ENCODE measurements at regions of chr2 and their contacts with region 1.

Region 1: GRCh38 chr2:73385595-73386341 is at the start of gene ALMS1:
- DNase-seq: peak; percentile 94
- ATAC-seq: peak; percentile 89
- H3K4me3 Mint-ChIP-seq: peak within 1 kb of the TSS; percentile 91
- H3K27ac Mint-ChIP-seq: peak within 1 kb of the TSS; percentile 91
- H3K4me1 Mint-ChIP-seq: peaks cover 27% of the 10 kb centered on the region
- H3K27me3 Mint-ChIP-seq: no peaks in the 10 kb centered on the region
- total RNA-seq, gene ALMS1: 19.2 to 24.0 TPM

Region 2: DNA sequence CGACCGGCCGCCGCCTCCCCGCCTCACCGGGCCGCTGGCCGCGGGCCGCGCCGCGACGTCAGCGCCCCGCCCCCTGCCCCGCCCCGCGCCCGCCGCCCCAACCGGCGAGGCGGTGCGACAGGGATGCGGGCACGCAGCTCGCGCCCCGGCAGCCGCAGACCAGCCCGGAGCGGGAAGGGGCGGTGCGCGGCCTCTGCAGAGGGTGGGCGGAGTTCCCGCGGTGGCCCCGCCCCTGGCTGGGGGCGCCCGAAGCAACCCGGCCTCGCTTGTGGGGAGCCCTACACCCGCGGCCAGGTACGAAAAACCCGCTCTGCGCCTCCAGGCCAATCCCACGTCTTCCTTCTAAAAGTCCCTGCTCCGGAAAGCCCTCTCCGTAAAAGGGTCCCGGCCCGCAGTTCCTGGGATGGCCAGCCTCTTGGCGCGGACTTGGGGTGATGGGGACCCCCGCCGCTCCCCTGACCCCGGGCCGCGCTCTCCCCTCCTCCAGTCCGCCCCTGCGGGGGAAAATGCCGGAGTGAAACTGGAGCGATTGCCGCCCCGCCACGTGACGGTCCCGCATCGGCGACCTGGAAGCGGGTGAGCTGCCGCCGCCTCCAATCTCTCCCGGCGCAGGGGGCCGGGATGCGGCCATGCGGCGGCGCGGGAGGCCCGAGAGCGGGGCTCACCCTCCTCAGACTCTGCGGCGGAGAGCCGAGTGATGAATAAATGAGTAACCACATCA is 272.7 kb before region 1 on chr2 and contains the start of gene RAB11FIP5:
- CTCF ChIA-PET with region 1: no interaction called
- POLR2A ChIA-PET with region 1: no interaction called
- intact Hi-C with region 1: loop called in 1 of 2 experiments (anchors 2 kb)
- DNase-seq: peak; percentile 87
- ATAC-seq: peak; percentile 84
- H3K4me3 Mint-ChIP-seq: peak within 1 kb of the TSS; percentile 79
- H3K27ac Mint-ChIP-seq: peak within 1 kb of the TSS; percentile 40
- H3K4me1 Mint-ChIP-seq: peaks cover 23% of the 10 kb centered on the region
- H3K27me3 Mint-ChIP-seq: peaks cover 2% of the 10 kb centered on the region
- total RNA-seq, gene RAB11FIP5: 16.4 to 16.5 TPM

Region 3: GRCh38 chr2:73225513-73226360 is 160.0 kb before region 1 on chr2:
- CTCF ChIA-PET with region 1: no interaction called
- POLR2A ChIA-PET with region 1: no interaction called
- intact Hi-C with region 1: no loop called
- DNase-seq: no peak
- ATAC-seq: no peak
- H3K4me3 Mint-ChIP-seq: no peak overlapping the region
- H3K27ac Mint-ChIP-seq: no peak overlapping the region
- H3K4me1 Mint-ChIP-seq: peaks cover 2% of the 10 kb centered on the region
- H3K27me3 Mint-ChIP-seq: no peaks in the 10 kb centered on the region

Region 4: GRCh38 chr2:73268830-73269685 is 116.7 kb before region 1 on chr2:
- CTCF ChIA-PET with region 1: interaction called, 3 read pairs
- POLR2A ChIA-PET with region 1: no interaction called
- intact Hi-C with region 1: loop called in 1 of 2 experiments (anchors 1 kb)
- DNase-seq: peak; percentile 86
- ATAC-seq: peak; percentile 95
- H3K4me3 Mint-ChIP-seq: peak overlapping the region; percentile 18
- H3K27ac Mint-ChIP-seq: no peak overlapping the region
- H3K4me1 Mint-ChIP-seq: peaks cover 21% of the 10 kb centered on the region
- H3K27me3 Mint-ChIP-seq: no peaks in the 10 kb centered on the region

Region 5: GRCh38 chr2:73337828-73338227 is 47.9 kb before region 1 on chr2:
- CTCF ChIA-PET with region 1: no interaction called
- POLR2A ChIA-PET with region 1: no interaction called
- intact Hi-C with region 1: no loop called
- DNase-seq: no peak
- ATAC-seq: no peak
- H3K4me3 Mint-ChIP-seq: no peak overlapping the region
- H3K27ac Mint-ChIP-seq: no peak overlapping the region
- H3K4me1 Mint-ChIP-seq: no peaks in the 10 kb centered on the region
- H3K27me3 Mint-ChIP-seq: peaks cover 7% of the 10 kb centered on the region

Region 6: GRCh38 chr2:73601780-73602179 is 216.0 kb after region 1 on chr2:
- CTCF ChIA-PET with region 1: no interaction called
- POLR2A ChIA-PET with region 1: no interaction called
- intact Hi-C with region 1: loop called in 1 of 2 experiments (anchors 1 kb)
- DNase-seq: no peak
- ATAC-seq: no peak
- H3K4me3 Mint-ChIP-seq: no peak overlapping the region
- H3K27ac Mint-ChIP-seq: no peak overlapping the region
- H3K4me1 Mint-ChIP-seq: peaks cover 6% of the 10 kb centered on the region
- H3K27me3 Mint-ChIP-seq: no peaks in the 10 kb centered on the region

Region 7: DNA sequence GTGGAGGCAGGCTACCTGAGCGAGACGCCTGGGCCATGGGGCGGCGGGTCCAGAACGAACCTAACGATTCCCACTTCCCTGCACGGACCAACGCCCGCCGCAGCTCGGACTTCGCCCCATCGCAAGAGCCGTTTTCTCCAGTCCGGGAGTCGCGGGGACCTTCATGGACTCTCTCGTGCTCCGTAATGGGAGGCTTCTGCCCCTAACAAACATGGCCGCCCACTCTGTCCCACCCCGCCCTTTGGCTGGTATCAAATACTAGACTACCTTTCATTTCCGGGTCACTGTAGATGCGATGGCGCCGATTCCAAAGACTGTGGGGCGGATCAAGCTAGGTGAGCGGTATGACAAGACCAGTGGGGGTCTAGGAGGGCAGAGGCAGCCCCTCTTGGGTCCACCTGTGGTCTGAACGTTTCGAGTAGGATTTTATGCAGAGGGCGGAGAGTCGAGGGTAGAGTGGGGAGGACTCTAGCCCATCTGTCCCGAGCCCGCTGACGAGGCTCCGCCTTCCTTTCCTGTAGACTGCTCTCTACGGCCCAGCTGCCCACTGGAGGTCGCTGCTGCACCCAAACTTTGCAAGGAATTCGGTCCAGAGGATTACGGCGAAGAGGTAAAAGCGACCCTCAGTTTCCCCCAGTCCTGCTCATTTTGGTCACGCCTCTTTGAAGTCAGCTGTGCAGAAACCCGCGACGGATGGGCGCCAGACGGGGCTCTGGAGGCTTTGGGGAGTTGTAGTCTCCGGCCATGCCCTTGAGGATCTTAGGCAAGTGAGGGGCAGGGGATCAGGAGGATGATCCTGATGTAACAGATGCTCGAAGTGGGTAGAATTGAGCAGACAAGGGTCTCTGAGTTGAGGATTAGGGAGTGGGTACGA is 1097.3 kb after region 1 on chr2 and contains the starts of genes CCDC142 and TTC31:
- CTCF ChIA-PET with region 1: no interaction called
- POLR2A ChIA-PET with region 1: no interaction called
- intact Hi-C with region 1: loop called in 1 of 2 experiments (anchors 2 kb)
- DNase-seq: peak; percentile 96
- ATAC-seq: peak; percentile 95
- H3K4me3 Mint-ChIP-seq: peak within 1 kb of the TSS; percentile 90
- H3K27ac Mint-ChIP-seq: peak within 1 kb of the TSS; percentile 99
- H3K4me1 Mint-ChIP-seq: peaks cover 31% of the 10 kb centered on the region
- H3K27me3 Mint-ChIP-seq: no peaks in the 10 kb centered on the region
- total RNA-seq, gene CCDC142: 9.7 to 13.2 TPM
- total RNA-seq, gene TTC31: 24.0 to 24.6 TPM

Region 8: DNA sequence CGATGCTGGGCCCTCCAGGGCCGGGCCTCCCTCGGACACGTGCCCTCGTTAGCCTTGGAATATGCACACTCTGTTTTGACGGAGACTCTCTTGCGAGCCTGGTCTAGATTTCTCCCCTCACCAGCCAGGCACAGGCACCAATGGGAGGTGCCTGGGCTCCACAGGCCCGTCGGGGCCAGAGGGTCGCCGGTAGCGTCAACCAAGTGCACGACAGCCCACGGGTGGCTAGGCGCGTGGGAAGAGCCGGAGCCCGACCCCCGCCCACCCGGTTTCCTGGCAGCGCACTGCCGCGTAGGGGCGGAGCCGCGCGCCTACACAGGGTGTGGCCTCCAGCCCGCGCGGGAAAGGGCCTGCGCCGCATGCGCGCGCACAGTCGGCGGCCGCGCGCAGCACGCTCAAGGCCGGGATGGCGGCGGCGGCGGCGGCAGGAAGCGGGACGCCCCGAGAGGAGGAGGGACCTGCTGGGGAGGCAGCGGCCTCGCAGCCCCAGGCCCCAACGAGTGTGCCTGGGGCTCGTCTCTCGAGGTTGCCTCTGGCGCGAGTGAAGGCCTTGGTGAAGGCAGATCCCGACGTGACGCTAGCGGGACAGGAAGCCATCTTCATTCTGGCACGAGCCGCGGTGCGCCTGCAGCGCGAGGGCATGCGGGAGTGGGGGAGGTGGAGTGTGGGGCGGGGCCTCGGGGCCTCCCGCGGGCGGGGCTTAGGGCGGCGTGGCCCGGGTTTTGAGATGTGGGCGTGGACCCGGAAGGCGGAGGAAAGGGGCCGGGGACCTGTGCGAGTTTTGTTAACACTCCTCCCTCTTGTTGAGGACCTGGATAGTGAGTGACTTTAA is 1572.7 kb after region 1 on chr2 and contains the start of gene POLE4:
- CTCF ChIA-PET with region 1: no interaction called
- POLR2A ChIA-PET with region 1: no interaction called
- intact Hi-C with region 1: loop called in 1 of 2 experiments (anchors 5 kb)
- DNase-seq: peak; percentile 97
- ATAC-seq: peak; percentile 92
- H3K4me3 Mint-ChIP-seq: peak within 1 kb of the TSS; percentile 68
- H3K27ac Mint-ChIP-seq: peak within 1 kb of the TSS; percentile 88
- H3K4me1 Mint-ChIP-seq: peaks cover 72% of the 10 kb centered on the region
- H3K27me3 Mint-ChIP-seq: no peaks in the 10 kb centered on the region
- total RNA-seq, gene POLE4: 29.3 to 44.0 TPM

Measured in activated CD4-positive, alpha-beta T cell treated with anti-CD3 and anti-CD28 coated beads for 36 hours (primary cell).